Caco-2 (cell line): ENCODE measurements at regions of chr6 and their contacts with region 1.

Region 1: GRCh38 chr6:44246663-44247337 is at the start of gene HSP90AB1:
- DNase-seq: peak; percentile 95 to 98
- H3K4me3 ChIP-seq: peak within 1 kb of the TSS; percentile 97
- H3K4me3 Mint-ChIP-seq: peak within 1 kb of the TSS; percentile 97
- H3K27ac Mint-ChIP-seq: peak within 1 kb of the TSS; percentile 99
- H3K4me1 ChIP-seq: peaks cover 15% of the 10 kb centered on the region
- H3K4me1 Mint-ChIP-seq: peaks cover 13% of the 10 kb centered on the region
- H3K27me3 ChIP-seq: no peaks in the 10 kb centered on the region
- H3K27me3 Mint-ChIP-seq: no peaks in the 10 kb centered on the region
- CTCF ChIP-seq: no peak
- total RNA-seq, gene HSP90AB1: 967 and 1,046 TPM in 2 replicates

Region 2: GRCh38 chr6:44192428-44193041 is 54.3 kb before region 1 on chr6:
- CTCF ChIA-PET with region 1: no interaction called
- POLR2A ChIA-PET with region 1: no interaction called
- intact Hi-C with region 1: no loop called
- DNase-seq: no peak
- H3K4me3 ChIP-seq: no peak overlapping the region
- H3K4me3 Mint-ChIP-seq: no peak overlapping the region
- H3K27ac Mint-ChIP-seq: peak overlapping the region; percentile 1
- H3K4me1 ChIP-seq: no peaks in the 10 kb centered on the region
- H3K4me1 Mint-ChIP-seq: no peaks in the 10 kb centered on the region
- H3K27me3 ChIP-seq: no peaks in the 10 kb centered on the region
- H3K27me3 Mint-ChIP-seq: no peaks in the 10 kb centered on the region
- CTCF ChIP-seq: no peak

Region 3: DNA sequence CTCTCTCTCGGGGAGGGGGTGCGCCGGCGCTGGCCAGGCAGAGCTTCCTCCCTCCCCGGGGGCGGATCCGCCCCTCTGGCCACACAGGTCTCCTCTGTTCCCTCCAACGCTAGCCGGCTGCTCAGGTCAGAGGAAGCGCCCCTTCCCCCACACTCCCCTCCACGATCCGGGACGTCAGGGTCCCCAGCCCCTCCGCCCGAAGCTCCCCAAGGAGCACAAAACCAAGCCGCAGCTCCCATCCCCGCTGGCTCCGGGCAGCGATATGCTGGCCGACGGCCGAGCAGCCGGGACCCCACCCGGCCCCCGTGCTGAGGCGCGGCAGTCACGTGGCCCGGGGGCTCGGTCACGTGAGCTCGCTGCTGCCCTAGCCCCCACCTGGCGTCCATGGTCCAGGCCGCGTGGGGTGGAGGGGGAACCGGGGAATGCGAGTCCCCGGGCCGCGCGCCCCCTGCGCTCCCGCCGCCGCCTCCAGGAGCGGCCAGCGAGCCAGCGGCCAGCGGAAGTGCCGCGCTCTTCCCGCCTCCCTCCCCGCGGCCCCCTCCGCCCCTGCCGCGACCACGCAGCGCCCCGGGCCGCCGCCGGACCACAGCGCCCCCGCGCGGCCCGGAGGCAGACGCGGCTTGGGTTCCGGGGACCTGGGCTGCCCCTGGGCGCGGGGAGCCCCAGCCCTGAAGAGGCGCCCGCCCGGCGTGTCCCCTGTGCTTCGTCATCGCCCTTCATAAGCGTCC is 10.4 kb after region 1 on chr6 and contains the start of gene SLC35B2:
- CTCF ChIA-PET with region 1: interaction called, 8 read pairs
- POLR2A ChIA-PET with region 1: interaction called, 37 read pairs
- intact Hi-C with region 1: no loop called
- DNase-seq: peak; percentile 82
- H3K4me3 ChIP-seq: peak within 1 kb of the TSS; percentile 60
- H3K4me3 Mint-ChIP-seq: peak within 1 kb of the TSS; percentile 78
- H3K27ac Mint-ChIP-seq: peak within 1 kb of the TSS; percentile 87
- H3K4me1 ChIP-seq: peaks cover 8% of the 10 kb centered on the region; the same call in 1 of the 2 replicates
- H3K4me1 Mint-ChIP-seq: peaks cover 29% of the 10 kb centered on the region
- H3K27me3 ChIP-seq: no peaks in the 10 kb centered on the region
- H3K27me3 Mint-ChIP-seq: no peaks in the 10 kb centered on the region
- CTCF ChIP-seq: peak; percentile 31 to 66
- total RNA-seq, gene SLC35B2: 44.6 and 44.8 TPM in 2 replicates

Region 4: GRCh38 chr6:44580901-44581300 is 334.1 kb after region 1 on chr6:
- CTCF ChIA-PET with region 1: no interaction called
- POLR2A ChIA-PET with region 1: no interaction called
- intact Hi-C with region 1: no loop called
- DNase-seq: no peak
- H3K4me3 ChIP-seq: no peak overlapping the region
- H3K4me3 Mint-ChIP-seq: no peak overlapping the region
- H3K27ac Mint-ChIP-seq: no peak overlapping the region
- H3K4me1 ChIP-seq: no peaks in the 10 kb centered on the region
- H3K4me1 Mint-ChIP-seq: no peaks in the 10 kb centered on the region
- H3K27me3 ChIP-seq: no peaks in the 10 kb centered on the region; the same call in 1 of the 2 replicates
- H3K27me3 Mint-ChIP-seq: peaks cover 12% of the 10 kb centered on the region
- CTCF ChIP-seq: no peak

Region 5: GRCh38 chr6:44655412-44656342 is 408.9 kb after region 1 on chr6:
- CTCF ChIA-PET with region 1: no interaction called
- POLR2A ChIA-PET with region 1: no interaction called
- intact Hi-C with region 1: no loop called
- DNase-seq: peak; percentile 70 to 80
- H3K4me3 ChIP-seq: no peak overlapping the region
- H3K4me3 Mint-ChIP-seq: peak overlapping the region; percentile 30
- H3K27ac Mint-ChIP-seq: peak overlapping the region; percentile 8
- H3K4me1 ChIP-seq: 0 out of 2 replicates have a peak, but pooled peaks cover 4% of the 10 kb centered on the region
- H3K4me1 Mint-ChIP-seq: peaks cover 15% of the 10 kb centered on the region
- H3K27me3 ChIP-seq: no peaks in the 10 kb centered on the region
- H3K27me3 Mint-ChIP-seq: peaks cover 4% of the 10 kb centered on the region
- CTCF ChIP-seq: peak; percentile 86 to 92